ENCODE measurements at regions of chr6 and their contacts with region 1.

Region 1: GRCh38 chr6:111483736-111484632 is 966 bp upstream of the REV3L start:
- DNase-seq: peak; percentile 96
- H3K4me3 Mint-ChIP-seq: peak overlapping the region; percentile 90
- H3K27ac Mint-ChIP-seq: peak overlapping the region; percentile 98
- H3K4me1 Mint-ChIP-seq: peaks cover 47% of the 10 kb centered on the region
- H3K27me3 Mint-ChIP-seq: no peaks in the 10 kb centered on the region

Region 2: DNA sequence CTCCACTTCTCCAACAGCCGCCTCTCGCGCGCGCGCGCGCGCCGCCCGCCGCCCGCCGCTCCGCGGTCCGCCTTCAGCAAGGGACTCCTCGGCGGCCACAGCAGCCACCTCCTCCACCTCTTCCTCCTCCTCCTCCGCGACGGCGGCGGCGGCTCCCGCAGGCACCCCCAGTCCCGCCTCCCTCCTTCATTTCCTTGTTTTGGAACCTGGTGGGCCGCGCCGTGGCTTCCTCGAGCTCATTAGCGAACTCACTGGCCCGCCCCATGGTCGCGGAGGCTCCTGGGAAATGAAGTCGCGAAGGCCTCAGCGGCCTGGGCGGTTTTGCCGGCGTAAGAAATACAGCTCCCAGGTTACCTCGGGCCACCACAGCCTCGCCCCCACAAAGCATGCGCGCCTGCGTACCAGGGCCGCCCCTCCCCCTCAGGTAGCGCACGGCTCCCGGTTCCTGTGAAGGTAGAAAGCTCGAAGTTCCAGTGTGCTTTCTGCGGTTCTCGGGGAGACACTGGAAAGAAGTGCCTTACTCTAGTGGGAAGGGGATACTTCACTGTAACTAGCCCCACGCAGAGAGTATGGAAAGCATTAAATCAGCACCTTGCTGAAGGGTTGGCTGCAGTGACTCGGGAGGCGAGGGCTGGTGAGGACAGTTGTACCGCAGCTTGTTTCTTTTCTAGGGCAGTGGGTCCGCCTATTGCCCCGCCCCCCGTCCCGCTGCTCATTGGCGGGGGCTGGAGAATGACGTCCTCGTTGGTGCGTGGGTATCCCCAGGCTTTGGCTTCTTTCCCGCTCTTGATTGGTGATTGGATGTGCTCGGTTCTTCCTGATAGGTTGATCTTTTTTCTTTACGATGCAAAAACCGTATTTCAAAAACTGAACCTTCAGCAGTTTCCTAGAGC is 668.5 kb before region 1 on chr6 and contains the start of gene CDK19:
- intact Hi-C with region 1: loop called (anchors 2 kb)
- DNase-seq: peak; percentile 99
- H3K4me3 Mint-ChIP-seq: peak within 1 kb of the TSS; percentile 98
- H3K27ac Mint-ChIP-seq: peak within 1 kb of the TSS; percentile 98
- H3K4me1 Mint-ChIP-seq: peaks cover 45% of the 10 kb centered on the region
- H3K27me3 Mint-ChIP-seq: no peaks in the 10 kb centered on the region
- total RNA-seq, gene CDK19: 13.0 and 15.7 TPM in 2 replicates

Region 3: GRCh38 chr6:111259089-111259831 is 224.7 kb before region 1 on chr6:
- intact Hi-C with region 1: loop called (anchors 1 kb)
- DNase-seq: peak; percentile 100
- H3K4me3 Mint-ChIP-seq: peak overlapping the region; percentile 84
- H3K27ac Mint-ChIP-seq: peak overlapping the region; percentile 91
- H3K4me1 Mint-ChIP-seq: peaks cover 26% of the 10 kb centered on the region
- H3K27me3 Mint-ChIP-seq: peaks cover 11% of the 10 kb centered on the region

Region 4: GRCh38 chr6:111439171-111439570 is 44.8 kb before region 1 on chr6:
- intact Hi-C with region 1: no loop called
- DNase-seq: no peak
- H3K4me3 Mint-ChIP-seq: no peak overlapping the region
- H3K27ac Mint-ChIP-seq: no peak overlapping the region
- H3K4me1 Mint-ChIP-seq: peaks cover 22% of the 10 kb centered on the region
- H3K27me3 Mint-ChIP-seq: no peaks in the 10 kb centered on the region

Region 5: GRCh38 chr6:111565326-111566221 is 81.6 kb after region 1 on chr6:
- intact Hi-C with region 1: loop called (anchors 2 kb)
- DNase-seq: peak; percentile 72
- H3K4me3 Mint-ChIP-seq: no peak overlapping the region
- H3K27ac Mint-ChIP-seq: peak overlapping the region; percentile 77
- H3K4me1 Mint-ChIP-seq: peaks cover 52% of the 10 kb centered on the region
- H3K27me3 Mint-ChIP-seq: no peaks in the 10 kb centered on the region

Region 6: GRCh38 chr6:111764238-111765175 is 280.5 kb after region 1 on chr6:
- intact Hi-C with region 1: loop called (anchors 10 kb)
- DNase-seq: peak; percentile 82
- H3K4me3 Mint-ChIP-seq: peak overlapping the region; percentile 57
- H3K27ac Mint-ChIP-seq: peak overlapping the region; percentile 98
- H3K4me1 Mint-ChIP-seq: peaks cover 96% of the 10 kb centered on the region
- H3K27me3 Mint-ChIP-seq: no peaks in the 10 kb centered on the region

Region 7: DNA sequence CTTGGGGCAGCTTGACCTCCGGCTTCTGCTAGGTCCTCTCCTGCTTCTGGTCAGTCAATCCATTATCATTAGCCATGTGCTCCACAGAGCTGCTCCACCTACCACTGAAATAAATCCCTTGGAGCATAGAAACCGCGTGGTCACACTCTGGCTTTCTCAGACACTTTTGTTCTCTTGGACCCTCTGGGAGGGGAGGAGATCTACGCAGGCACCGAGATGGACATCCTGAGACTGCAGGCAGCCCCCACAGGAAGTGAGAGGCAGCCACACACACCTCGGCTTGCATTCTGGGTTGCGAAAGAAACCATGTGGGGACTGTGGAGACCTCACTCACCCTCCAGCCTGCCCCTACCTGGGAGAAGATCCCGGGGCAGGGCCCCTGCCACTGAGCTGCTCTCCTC is 309.7 kb after region 1 on chr6:
- intact Hi-C with region 1: no loop called
- DNase-seq: peak; percentile 80
- H3K4me3 Mint-ChIP-seq: peak overlapping the region; percentile 45
- H3K27ac Mint-ChIP-seq: peak overlapping the region; percentile 85
- H3K4me1 Mint-ChIP-seq: peaks cover 63% of the 10 kb centered on the region
- H3K27me3 Mint-ChIP-seq: no peaks in the 10 kb centered on the region

Region 8: GRCh38 chr6:111873178-111874024 is 389.4 kb after region 1 on chr6 and contains the start of gene FYN:
- intact Hi-C with region 1: loop called (anchors 2 kb)
- DNase-seq: peak; percentile 100
- H3K4me3 Mint-ChIP-seq: peak within 1 kb of the TSS; percentile 99
- H3K27ac Mint-ChIP-seq: peak within 1 kb of the TSS; percentile 96
- H3K4me1 Mint-ChIP-seq: peaks cover 34% of the 10 kb centered on the region
- H3K27me3 Mint-ChIP-seq: peaks cover 2% of the 10 kb centered on the region
- total RNA-seq, gene FYN: 331 and 341 TPM in 2 replicates

Region 9: DNA sequence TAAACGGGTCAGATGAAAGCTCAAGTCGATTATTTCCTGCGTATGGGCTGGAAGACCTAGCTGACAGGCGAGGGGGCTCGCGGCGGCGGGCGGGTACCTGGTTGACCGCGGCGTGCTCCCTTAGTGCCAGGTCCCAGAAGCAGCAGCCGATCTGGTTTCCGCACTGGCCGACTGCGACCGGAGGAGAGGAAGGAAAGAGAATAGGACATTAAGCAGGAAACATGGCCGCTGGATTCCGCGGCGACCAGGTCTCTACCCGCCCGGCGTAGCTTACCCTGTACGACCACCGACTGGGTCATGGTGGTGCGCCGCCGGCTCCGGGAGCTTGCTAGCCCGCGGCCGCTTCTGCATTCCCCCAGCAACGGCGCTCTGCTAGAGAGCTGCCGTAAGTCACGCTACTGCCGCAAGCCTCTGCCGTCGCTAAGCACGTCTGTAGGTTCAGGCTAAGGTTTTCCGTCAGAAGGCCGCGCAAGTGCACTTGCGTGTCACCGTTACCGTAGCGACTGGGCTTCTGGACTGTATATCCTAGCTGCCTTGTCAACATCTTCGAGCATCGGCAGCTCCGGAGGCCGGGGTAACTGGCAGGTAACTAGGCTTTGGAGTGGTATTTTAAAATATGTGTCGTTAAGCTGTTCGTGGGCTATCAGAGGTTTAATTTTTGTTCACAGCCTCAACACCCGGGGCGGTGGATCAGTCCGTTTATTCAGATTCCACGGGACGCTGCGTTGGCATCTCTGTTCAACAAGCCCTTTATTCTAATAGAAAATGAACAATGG is 603.3 kb after region 1 on chr6 and contains the starts of genes FAM229B and TUBE1:
- intact Hi-C with region 1: loop called (anchors 5 kb)
- DNase-seq: peak; percentile 96
- H3K4me3 Mint-ChIP-seq: no peak within 1 kb of the TSS
- H3K27ac Mint-ChIP-seq: no peak within 1 kb of the TSS
- H3K4me1 Mint-ChIP-seq: peaks cover 7% of the 10 kb centered on the region
- H3K27me3 Mint-ChIP-seq: peaks cover 35% of the 10 kb centered on the region
- total RNA-seq, gene FAM229B: 0.91 and 0.97 TPM in 2 replicates
- total RNA-seq, gene TUBE1: 24.3 and 30.1 TPM in 2 replicates